CD4-positive, alpha-beta T cell (primary cell): ENCODE measurements at regions of chr15 and their contacts with region 1.

Region 1: DNA sequence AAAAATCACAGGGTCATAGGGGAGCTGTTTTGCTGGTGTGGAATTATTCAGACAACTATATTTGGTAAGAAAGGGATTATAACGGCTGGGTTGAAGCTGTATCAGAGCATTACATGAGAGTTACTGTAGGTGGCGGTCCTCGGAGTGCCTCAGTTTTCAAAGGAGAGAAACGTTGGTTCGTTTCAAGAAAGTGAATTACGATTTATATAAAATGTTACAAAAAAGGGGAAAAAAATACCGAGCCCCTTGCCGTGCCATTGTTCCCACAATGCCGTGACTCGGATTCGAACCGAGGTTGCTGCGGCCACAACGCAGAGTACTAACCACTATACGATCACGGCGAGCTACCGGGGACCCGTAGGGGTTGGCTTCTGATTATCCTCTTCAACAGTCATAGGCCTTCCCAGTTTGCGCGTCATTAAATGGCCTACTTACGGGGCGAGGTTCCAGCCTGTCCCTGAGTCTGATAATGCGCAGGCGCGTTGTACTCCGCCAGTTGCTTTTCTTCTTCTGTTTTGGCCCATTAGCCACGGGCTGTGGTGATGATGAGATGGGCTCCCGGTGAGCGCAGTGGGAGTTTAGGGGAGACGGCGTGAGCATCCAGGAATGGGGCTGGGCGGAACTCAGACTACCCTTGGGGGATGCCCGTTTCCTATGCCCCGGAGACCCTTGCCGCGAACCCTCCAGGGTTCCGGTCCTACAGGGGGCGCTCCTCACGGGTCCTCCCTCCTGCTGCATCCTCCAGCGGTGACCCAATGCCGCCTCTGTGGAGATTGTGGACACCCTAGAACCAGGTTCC is 10.8 kb upstream of the SHF start:
- DNase-seq: peak; percentile 84 to 99 (median 94)
- ATAC-seq: peak; percentile 61
- H3K4me3 ChIP-seq: peak overlapping the region; percentile 88
- H3K4me3 Mint-ChIP-seq: no peak overlapping the region
- H3K27ac ChIP-seq: peak overlapping the region; percentile 91 to 94
- H3K27ac Mint-ChIP-seq: no peak overlapping the region
- H3K4me1 ChIP-seq: peaks cover 36% of the 10 kb centered on the region
- H3K4me1 Mint-ChIP-seq: no peaks in the 10 kb centered on the region
- H3K27me3 ChIP-seq: no peaks in the 10 kb centered on the region
- H3K27me3 Mint-ChIP-seq: peaks cover 16% of the 10 kb centered on the region
- CTCF ChIP-seq: peak; percentile 46

Region 2: GRCh38 chr15:44711356-44712107 is 487.0 kb before region 1 on chr15 and contains the start of gene B2M:
- CTCF ChIA-PET with region 1: no interaction called
- POLR2A ChIA-PET with region 1: interaction called, 11 read pairs
- intact Hi-C with region 1: no loop called
- DNase-seq: peak; percentile 92 to 98 (median 96)
- ATAC-seq: peak; percentile 82
- H3K4me3 ChIP-seq: peak within 1 kb of the TSS; percentile 83
- H3K4me3 Mint-ChIP-seq: peak within 1 kb of the TSS; percentile 96
- H3K27ac ChIP-seq: peak within 1 kb of the TSS; percentile 99 to 100
- H3K27ac Mint-ChIP-seq: peak within 1 kb of the TSS; percentile 100
- H3K4me1 ChIP-seq: peaks cover 38% of the 10 kb centered on the region
- H3K4me1 Mint-ChIP-seq: peaks cover 70% of the 10 kb centered on the region
- H3K27me3 ChIP-seq: no peaks in the 10 kb centered on the region
- H3K27me3 Mint-ChIP-seq: no peaks in the 10 kb centered on the region
- CTCF ChIP-seq: no peak
- total RNA-seq, gene B2M: 4,357 to 4,503 TPM

Region 3: DNA sequence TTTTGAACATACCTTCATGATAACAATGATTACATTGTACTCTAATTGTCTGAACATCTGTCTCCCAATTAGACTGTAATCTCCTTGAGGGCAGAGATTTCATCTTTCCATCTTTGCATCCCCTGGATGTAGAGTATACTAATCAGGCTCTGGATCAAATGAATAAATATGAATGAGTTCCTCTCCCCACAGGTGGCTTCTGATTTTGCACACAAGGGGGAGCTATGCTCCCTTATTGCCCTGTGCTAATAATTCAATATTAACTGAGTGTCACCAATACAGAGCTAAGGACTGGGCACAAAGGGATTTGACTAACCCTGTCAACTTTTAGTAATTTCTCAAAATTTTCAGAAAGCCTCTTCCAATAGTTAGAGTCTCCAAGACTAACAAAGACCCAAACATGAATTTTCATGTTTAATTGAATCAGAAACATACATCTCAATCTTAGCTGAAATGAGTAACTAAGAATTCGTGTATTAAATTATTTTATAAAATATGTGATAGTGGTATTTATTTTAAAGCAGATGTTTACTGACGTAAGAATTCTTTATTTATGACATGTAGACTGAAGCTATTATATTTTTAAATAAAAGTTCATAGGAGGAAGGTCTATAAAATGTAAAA is 71.9 kb before region 1 on chr15:
- CTCF ChIA-PET with region 1: no interaction called
- POLR2A ChIA-PET with region 1: no interaction called
- intact Hi-C with region 1: loop called (anchors 2 to 5 kb)
- DNase-seq: peak in 10 of 14 experiments; percentile 26 to 71 (median 38)
- ATAC-seq: peak; percentile 69
- H3K4me3 ChIP-seq: no peak overlapping the region
- H3K4me3 Mint-ChIP-seq: no peak overlapping the region
- H3K27ac ChIP-seq: no peak overlapping the region
- H3K27ac Mint-ChIP-seq: no peak overlapping the region
- H3K4me1 ChIP-seq: peaks cover 14% of the 10 kb centered on the region
- H3K4me1 Mint-ChIP-seq: peaks cover 7% of the 10 kb centered on the region
- H3K27me3 ChIP-seq: peaks cover 47 to 60% of the 10 kb centered on the region in 2 experiments
- H3K27me3 Mint-ChIP-seq: peaks cover 72% of the 10 kb centered on the region
- CTCF ChIP-seq: peak; percentile 80

Region 4: DNA sequence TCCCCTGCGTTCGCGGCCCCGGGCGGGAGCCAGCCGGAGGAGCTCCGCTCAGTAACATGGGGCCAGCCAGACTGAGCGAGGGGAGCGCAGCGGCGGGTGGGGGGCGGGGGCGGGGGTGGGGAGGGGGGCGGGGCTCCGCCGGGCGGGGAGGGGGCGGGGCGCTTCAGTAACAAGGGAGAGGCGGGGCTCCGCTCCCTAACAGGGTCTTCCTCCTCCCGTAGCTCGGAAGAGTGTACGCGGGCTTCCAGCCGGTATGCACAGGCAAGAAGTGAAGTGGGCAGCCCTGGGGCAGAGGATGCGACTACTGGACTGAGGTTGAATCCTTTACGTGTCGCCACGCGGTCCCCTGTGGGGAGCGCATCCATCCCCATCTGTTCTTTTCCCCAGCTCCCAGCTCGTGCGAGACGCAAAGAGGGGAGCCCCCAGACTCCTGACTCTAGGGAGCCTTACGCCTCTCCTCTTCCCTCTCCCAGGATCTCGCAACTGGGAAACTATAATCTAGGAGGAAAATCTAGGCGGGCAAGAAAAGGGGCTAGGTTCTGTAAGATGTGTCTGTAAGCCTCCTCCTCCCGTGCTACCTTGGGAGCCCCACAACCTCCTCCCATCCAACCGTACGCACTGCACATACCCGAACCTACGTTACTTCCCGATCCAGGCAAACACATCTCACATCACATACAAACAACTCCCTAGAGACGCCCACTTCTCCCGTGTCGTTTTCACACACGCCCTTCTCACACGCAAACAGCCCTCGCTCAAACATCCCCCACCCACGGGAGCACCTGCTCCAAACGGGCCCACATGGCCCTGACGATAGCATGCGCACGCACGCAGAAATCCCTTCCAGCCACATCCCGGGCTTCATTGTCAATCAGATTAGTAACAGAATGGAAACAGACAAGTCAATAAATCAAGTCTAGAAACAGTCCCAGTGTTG is 10.4 kb before region 1 on chr15 and contains the start of gene SHF:
- CTCF ChIA-PET with region 1: interaction called, 9 read pairs
- POLR2A ChIA-PET with region 1: interaction called, 129 read pairs
- intact Hi-C with region 1: loop called in 1 of 2 experiments (anchors 1 kb)
- DNase-seq: peak; percentile 30 to 87 (median 58)
- ATAC-seq: peak; percentile 71
- H3K4me3 ChIP-seq: peak within 1 kb of the TSS; percentile 68
- H3K4me3 Mint-ChIP-seq: peak within 1 kb of the TSS; percentile 92
- H3K27ac ChIP-seq: peak within 1 kb of the TSS in 1 of 2 donors; percentile 21
- H3K27ac Mint-ChIP-seq: peak within 1 kb of the TSS; percentile 72
- H3K4me1 ChIP-seq: peaks cover 24% of the 10 kb centered on the region
- H3K4me1 Mint-ChIP-seq: peaks cover 12% of the 10 kb centered on the region
- H3K27me3 ChIP-seq: no peaks in the 10 kb centered on the region
- H3K27me3 Mint-ChIP-seq: no peaks in the 10 kb centered on the region
- CTCF ChIP-seq: no peak
- total RNA-seq, gene SHF: 3.7 to 3.9 TPM

Region 5: GRCh38 chr15:45279024-45279698 is 80.6 kb after region 1 on chr15:
- CTCF ChIA-PET with region 1: interaction called, 3 read pairs
- POLR2A ChIA-PET with region 1: interaction called, 3 read pairs
- intact Hi-C with region 1: loop called in 1 of 2 experiments (anchors 1 kb)
- DNase-seq: peak; percentile 94 to 99 (median 96)
- ATAC-seq: peak; percentile 99
- H3K4me3 ChIP-seq: peak overlapping the region; percentile 60
- H3K4me3 Mint-ChIP-seq: peak overlapping the region; percentile 89
- H3K27ac ChIP-seq: peak overlapping the region; percentile 66 to 74
- H3K27ac Mint-ChIP-seq: peak overlapping the region; percentile 86
- H3K4me1 ChIP-seq: peaks cover 16% of the 10 kb centered on the region
- H3K4me1 Mint-ChIP-seq: peaks cover 19% of the 10 kb centered on the region
- H3K27me3 ChIP-seq: no peaks in the 10 kb centered on the region
- H3K27me3 Mint-ChIP-seq: peaks cover under 1% of the 10 kb centered on the region
- CTCF ChIP-seq: no peak

Region 6: DNA sequence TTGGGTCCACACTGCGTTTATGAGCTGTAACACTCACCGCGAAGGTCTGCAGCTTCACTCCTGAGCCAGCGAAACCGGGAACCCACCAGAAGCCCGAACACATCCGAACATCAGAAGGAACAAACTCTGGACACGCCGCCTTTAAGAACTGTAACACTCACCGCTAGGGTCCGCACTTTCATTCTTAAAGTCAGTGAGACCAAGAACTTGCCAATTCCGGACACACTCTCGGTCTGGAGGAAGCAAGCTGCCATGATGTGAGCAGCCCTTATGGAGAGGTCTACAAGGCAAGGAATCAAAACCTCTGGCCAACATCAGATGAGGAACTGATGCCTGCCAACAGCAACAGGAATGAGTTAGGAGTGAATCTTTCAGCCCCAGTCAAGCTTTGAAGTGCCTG is 116.4 kb after region 1 on chr15:
- CTCF ChIA-PET with region 1: no interaction called
- POLR2A ChIA-PET with region 1: no interaction called
- intact Hi-C with region 1: no loop called
- DNase-seq: peak in 1 of 14 experiments; percentile 6
- ATAC-seq: no peak
- H3K4me3 ChIP-seq: no peak overlapping the region
- H3K4me3 Mint-ChIP-seq: no peak overlapping the region
- H3K27ac ChIP-seq: no peak overlapping the region
- H3K27ac Mint-ChIP-seq: no peak overlapping the region
- H3K4me1 ChIP-seq: no peaks in the 10 kb centered on the region
- H3K4me1 Mint-ChIP-seq: no peaks in the 10 kb centered on the region
- H3K27me3 ChIP-seq: peaks cover 4 to 9% of the 10 kb centered on the region in 2 experiments
- H3K27me3 Mint-ChIP-seq: peaks cover 30% of the 10 kb centered on the region
- CTCF ChIP-seq: no peak

Region 7: GRCh38 chr15:45481135-45481534 is 282.6 kb after region 1 on chr15:
- CTCF ChIA-PET with region 1: no interaction called
- POLR2A ChIA-PET with region 1: no interaction called
- intact Hi-C with region 1: no loop called
- DNase-seq: no peak
- ATAC-seq: no peak
- H3K4me3 ChIP-seq: no peak overlapping the region
- H3K4me3 Mint-ChIP-seq: no peak overlapping the region
- H3K27ac ChIP-seq: no peak overlapping the region
- H3K27ac Mint-ChIP-seq: no peak overlapping the region
- H3K4me1 ChIP-seq: no peaks in the 10 kb centered on the region
- H3K4me1 Mint-ChIP-seq: no peaks in the 10 kb centered on the region
- H3K27me3 ChIP-seq: no peaks in the 10 kb centered on the region
- H3K27me3 Mint-ChIP-seq: no peaks in the 10 kb centered on the region
- CTCF ChIP-seq: no peak